ENCODE measurements at regions of chr5 and their contacts with region 1.

Region 1: GRCh38 chr5:133581918-133582317 is 30.4 kb downstream of the FSTL4 start:
- DNase-seq: peak in 1 of 2 donors; percentile 55
- H3K4me3 ChIP-seq: no peak overlapping the region
- H3K27ac ChIP-seq: no peak overlapping the region
- H3K4me1 ChIP-seq: no peaks in the 10 kb centered on the region
- H3K27me3 ChIP-seq: peaks cover 0 to 24% of the 10 kb centered on the region in 2 donors
- CTCF ChIP-seq: no peak

Region 2: DNA sequence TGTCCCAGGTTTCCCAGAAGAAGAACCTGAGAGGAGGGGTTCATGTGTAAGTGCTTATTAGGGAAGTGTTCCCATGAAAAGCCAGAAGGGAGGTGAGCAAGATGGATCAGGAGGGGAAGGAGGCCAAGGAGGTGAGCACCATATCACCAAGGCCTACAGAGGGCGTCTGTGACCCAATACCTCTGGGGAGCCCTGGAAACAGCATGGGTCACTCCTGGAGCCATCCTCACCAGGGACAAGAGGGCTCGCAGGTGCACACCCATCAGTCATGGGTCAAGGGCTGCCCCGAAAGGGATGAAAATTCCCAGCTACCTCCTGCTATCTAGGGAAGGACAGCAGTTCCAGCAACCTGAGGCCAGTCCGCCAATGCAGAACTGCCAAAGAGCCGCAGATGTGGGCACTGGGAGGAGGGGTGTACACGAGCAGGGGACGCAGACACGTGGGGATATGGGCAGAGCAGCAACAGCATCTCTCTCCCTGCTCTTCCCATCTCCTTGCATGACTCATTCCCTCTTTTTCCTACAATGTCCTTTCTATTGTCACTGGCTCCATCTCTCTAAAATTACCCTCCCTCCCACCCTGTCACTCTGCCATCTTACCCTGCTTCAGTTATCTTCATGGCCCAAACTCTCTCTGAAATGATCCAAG is 198.0 kb after region 1 on chr5:
- intact Hi-C with region 1: loop called (anchors 5 kb)
- DNase-seq: no peak
- H3K4me3 ChIP-seq: no peak overlapping the region
- H3K27ac ChIP-seq: no peak overlapping the region
- H3K4me1 ChIP-seq: no peaks in the 10 kb centered on the region
- H3K27me3 ChIP-seq: no peaks in the 10 kb centered on the region
- CTCF ChIP-seq: no peak

Measured in tibial artery (tissue), 4 donors.